Caco-2 (cell line): ENCODE measurements at regions of chr7 and their contacts with region 1.

Region 1: GRCh38 chr7:108613112-108613759 is 43.6 kb downstream of the DNAJB9 start:
- DNase-seq: peak in 1 of 2 experiments; percentile 62
- H3K4me3 ChIP-seq: no peak overlapping the region
- H3K4me3 Mint-ChIP-seq: no peak overlapping the region
- H3K27ac Mint-ChIP-seq: no peak overlapping the region
- H3K4me1 ChIP-seq: peaks cover 11% of the 10 kb centered on the region; the same call in 1 of the 2 replicates
- H3K4me1 Mint-ChIP-seq: peaks cover 12% of the 10 kb centered on the region
- H3K27me3 ChIP-seq: no peaks in the 10 kb centered on the region
- H3K27me3 Mint-ChIP-seq: no peaks in the 10 kb centered on the region
- CTCF ChIP-seq: peak; percentile 59 to 88

Region 2: GRCh38 chr7:108222236-108222892 is 390.9 kb before region 1 on chr7:
- CTCF ChIA-PET with region 1: no interaction called
- POLR2A ChIA-PET with region 1: no interaction called
- intact Hi-C with region 1: no loop called
- DNase-seq: peak; percentile 58 to 62
- H3K4me3 ChIP-seq: no peak overlapping the region
- H3K4me3 Mint-ChIP-seq: no peak overlapping the region
- H3K27ac Mint-ChIP-seq: peak overlapping the region; percentile 67
- H3K4me1 ChIP-seq: peaks cover 17% of the 10 kb centered on the region
- H3K4me1 Mint-ChIP-seq: peaks cover 20% of the 10 kb centered on the region
- H3K27me3 ChIP-seq: no peaks in the 10 kb centered on the region
- H3K27me3 Mint-ChIP-seq: no peaks in the 10 kb centered on the region
- CTCF ChIP-seq: peak in 1 of 2 experiments; percentile 55

Region 3: DNA sequence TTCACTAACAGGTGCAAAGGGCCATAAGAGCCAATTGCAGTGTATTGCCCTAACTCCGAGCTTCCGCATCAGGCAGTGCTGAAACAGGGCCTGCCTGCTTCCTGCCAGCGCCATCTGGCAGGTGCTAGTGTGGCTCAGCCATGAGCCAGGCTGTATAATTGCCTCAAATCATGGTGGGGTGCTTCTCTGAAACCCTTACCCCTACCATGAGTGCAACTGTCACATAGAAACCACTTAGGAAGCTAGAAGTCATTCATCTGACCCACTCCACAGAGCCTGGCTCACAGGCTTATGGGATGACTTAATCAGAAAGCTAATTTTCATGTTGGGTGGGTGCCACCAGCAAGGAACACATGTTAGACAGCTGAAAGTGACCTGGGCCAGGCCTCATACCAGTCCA is 349.8 kb before region 1 on chr7:
- CTCF ChIA-PET with region 1: no interaction called
- POLR2A ChIA-PET with region 1: no interaction called
- intact Hi-C with region 1: no loop called
- DNase-seq: no peak
- H3K4me3 ChIP-seq: no peak overlapping the region
- H3K4me3 Mint-ChIP-seq: no peak overlapping the region
- H3K27ac Mint-ChIP-seq: no peak overlapping the region
- H3K4me1 ChIP-seq: no peaks in the 10 kb centered on the region
- H3K4me1 Mint-ChIP-seq: peaks cover 6% of the 10 kb centered on the region
- H3K27me3 ChIP-seq: no peaks in the 10 kb centered on the region
- H3K27me3 Mint-ChIP-seq: no peaks in the 10 kb centered on the region
- CTCF ChIP-seq: no peak

Region 4: DNA sequence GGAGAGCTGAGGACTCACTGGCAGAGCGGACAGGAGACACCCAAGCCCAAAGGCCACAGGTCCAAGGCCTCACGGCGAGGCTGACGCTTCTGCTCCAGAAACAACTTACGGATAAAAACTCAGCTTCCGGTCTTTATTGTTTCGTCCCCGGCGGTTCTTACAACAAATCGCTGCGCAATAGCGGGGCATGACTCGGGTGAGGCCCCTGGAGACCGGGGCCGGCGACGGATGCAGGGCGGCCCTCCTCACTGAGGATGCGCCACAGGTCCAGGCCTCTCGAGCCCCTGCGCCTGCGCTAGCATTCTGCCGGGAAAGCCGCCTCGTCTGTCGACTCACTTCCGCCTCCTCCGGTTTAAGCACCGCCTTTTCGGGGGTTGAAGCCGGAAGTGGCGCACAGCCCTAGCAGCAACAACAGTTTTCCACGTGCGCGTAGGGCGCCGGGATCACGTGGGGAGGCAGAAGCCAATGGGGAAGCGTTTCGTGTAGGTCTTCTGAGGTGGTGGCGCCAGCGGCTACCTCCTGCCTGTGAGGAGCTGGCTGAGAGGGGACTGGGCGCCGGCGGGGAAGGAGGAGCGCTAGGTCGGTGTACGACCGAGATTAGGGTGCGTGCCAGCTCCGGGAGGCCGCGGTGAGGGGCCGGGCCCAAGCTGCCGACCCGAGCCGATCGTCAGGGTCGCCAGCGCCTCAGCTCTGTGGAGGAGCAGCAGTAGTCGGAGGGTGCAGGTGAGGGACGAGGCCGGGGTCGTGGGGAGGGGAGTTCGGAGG is 43.7 kb before region 1 on chr7 and contains the starts of genes DNAJB9 and THAP5:
- CTCF ChIA-PET with region 1: no interaction called
- POLR2A ChIA-PET with region 1: no interaction called
- intact Hi-C with region 1: loop called (anchors 2 kb)
- DNase-seq: peak; percentile 99 to 100
- H3K4me3 ChIP-seq: peak within 1 kb of the TSS; percentile 93
- H3K4me3 Mint-ChIP-seq: peak within 1 kb of the TSS; percentile 98
- H3K27ac Mint-ChIP-seq: peak within 1 kb of the TSS; percentile 98
- H3K4me1 ChIP-seq: no peaks in the 10 kb centered on the region; the same call in 1 of the 2 replicates
- H3K4me1 Mint-ChIP-seq: no peaks in the 10 kb centered on the region
- H3K27me3 ChIP-seq: no peaks in the 10 kb centered on the region
- H3K27me3 Mint-ChIP-seq: no peaks in the 10 kb centered on the region
- CTCF ChIP-seq: no peak
- total RNA-seq, gene DNAJB9: 22.0 and 22.1 TPM in 2 replicates
- total RNA-seq, gene THAP5: 18.3 and 20.4 TPM in 2 replicates

Region 5: DNA sequence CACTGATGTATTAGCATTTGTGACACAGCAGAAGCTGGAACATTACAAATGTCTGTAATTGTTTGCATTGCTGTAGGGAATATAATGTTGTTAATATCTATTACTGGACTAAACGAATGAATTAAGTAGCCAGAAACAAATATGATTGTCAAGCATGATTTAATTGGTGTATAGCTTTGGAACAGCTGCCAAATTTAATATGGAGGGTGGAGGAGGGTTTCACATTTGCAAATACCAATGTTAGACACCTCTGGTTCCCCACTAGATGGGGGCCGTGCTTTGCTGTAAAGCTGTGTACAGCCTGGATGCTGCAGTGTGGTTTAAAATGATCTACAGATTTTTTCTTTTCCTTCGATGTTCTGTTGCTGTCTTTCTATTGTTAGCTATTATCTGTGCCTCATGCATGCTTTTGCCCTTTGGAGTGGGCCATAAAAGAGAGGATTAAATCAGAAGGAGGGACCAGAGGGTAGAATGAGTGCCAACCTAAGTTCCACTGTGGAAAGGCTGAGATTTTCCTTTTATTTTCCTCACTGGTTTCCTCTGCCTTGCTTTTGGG is 20.5 kb before region 1 on chr7:
- CTCF ChIA-PET with region 1: no interaction called
- POLR2A ChIA-PET with region 1: no interaction called
- intact Hi-C with region 1: loop called (anchors 2 kb)
- DNase-seq: peak; percentile 61 to 69
- H3K4me3 ChIP-seq: no peak overlapping the region
- H3K4me3 Mint-ChIP-seq: no peak overlapping the region
- H3K27ac Mint-ChIP-seq: no peak overlapping the region
- H3K4me1 ChIP-seq: peaks cover 20% of the 10 kb centered on the region
- H3K4me1 Mint-ChIP-seq: peaks cover 19% of the 10 kb centered on the region
- H3K27me3 ChIP-seq: no peaks in the 10 kb centered on the region
- H3K27me3 Mint-ChIP-seq: no peaks in the 10 kb centered on the region
- CTCF ChIP-seq: peak; percentile 45 to 71

Region 6: DNA sequence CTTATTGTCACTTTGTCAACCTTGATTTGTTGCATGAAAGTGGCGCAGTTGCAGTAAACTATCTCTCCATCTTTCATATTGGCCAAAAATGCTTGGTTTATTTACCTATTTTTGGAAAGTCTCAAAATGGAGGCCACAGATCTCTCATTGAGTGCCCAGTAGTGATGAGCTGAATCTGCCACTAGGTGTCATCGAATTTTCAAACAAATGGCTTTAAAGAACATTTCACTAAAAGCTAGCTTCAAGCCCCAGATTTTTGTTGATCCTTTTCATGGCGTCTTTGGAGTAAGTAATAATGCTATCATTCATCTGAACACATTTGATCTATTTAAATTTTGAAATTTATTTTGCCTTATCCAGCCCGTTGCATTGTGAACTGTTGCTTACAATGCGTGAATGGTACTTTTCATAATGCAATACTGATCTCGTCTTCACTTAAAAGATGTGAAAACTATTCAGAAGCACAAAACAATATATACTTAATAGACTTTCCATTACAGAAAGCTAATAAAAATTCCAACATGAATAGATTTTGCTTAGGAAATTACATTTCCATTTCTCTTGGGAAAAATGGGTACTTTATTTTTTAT is 192.7 kb after region 1 on chr7:
- CTCF ChIA-PET with region 1: no interaction called
- POLR2A ChIA-PET with region 1: no interaction called
- intact Hi-C with region 1: loop called (anchors 5 kb)
- DNase-seq: peak in 1 of 2 experiments; percentile 20
- H3K4me3 ChIP-seq: no peak overlapping the region
- H3K4me3 Mint-ChIP-seq: no peak overlapping the region
- H3K27ac Mint-ChIP-seq: no peak overlapping the region
- H3K4me1 ChIP-seq: no peaks in the 10 kb centered on the region
- H3K4me1 Mint-ChIP-seq: no peaks in the 10 kb centered on the region
- H3K27me3 ChIP-seq: no peaks in the 10 kb centered on the region
- H3K27me3 Mint-ChIP-seq: no peaks in the 10 kb centered on the region
- CTCF ChIP-seq: peak; percentile 50 to 63

Region 7: DNA sequence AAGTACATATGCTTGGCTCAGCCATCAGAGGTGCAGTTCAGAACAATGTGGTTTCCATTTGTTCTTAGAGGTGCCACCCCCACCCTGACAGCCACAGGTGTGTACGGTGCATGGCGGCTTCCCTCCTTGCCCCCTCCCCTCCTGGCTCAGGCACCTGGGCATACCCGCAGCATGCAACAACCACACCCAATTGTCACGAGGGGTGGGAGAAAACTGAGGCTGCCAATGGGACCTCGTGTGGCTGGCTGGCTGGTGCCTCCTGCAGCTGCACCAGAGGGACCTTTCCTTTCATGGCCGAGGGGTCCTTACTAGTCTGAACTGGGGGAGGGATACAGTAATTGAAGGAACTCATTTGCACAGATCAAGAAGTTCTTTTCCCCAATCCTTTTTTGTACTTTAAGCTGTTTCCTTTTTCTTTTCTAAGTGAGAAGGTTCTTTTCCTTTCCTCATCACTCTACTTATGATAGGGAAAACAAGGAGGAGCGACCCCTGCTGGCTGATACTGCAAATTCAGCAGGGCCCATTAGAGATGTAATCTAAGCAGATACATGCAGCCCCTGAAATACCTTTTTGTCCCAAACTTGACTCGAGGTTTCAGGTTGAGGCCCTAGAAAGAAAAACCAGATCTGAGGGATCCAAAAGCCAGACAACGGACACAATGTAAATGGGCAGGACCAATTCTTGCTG is 261.8 kb after region 1 on chr7:
- CTCF ChIA-PET with region 1: no interaction called
- POLR2A ChIA-PET with region 1: no interaction called
- intact Hi-C with region 1: loop called (anchors 1 kb)
- DNase-seq: peak in 1 of 2 experiments; percentile 17
- H3K4me3 ChIP-seq: no peak overlapping the region
- H3K4me3 Mint-ChIP-seq: no peak overlapping the region
- H3K27ac Mint-ChIP-seq: no peak overlapping the region
- H3K4me1 ChIP-seq: no peaks in the 10 kb centered on the region
- H3K4me1 Mint-ChIP-seq: no peaks in the 10 kb centered on the region
- H3K27me3 ChIP-seq: no peaks in the 10 kb centered on the region
- H3K27me3 Mint-ChIP-seq: no peaks in the 10 kb centered on the region
- CTCF ChIP-seq: no peak

Region 8: GRCh38 chr7:108973075-108973474 is 359.8 kb after region 1 on chr7:
- CTCF ChIA-PET with region 1: no interaction called
- POLR2A ChIA-PET with region 1: no interaction called
- intact Hi-C with region 1: loop called (anchors 1 kb)
- DNase-seq: peak in 1 of 2 experiments; percentile 43
- H3K4me3 ChIP-seq: no peak overlapping the region
- H3K4me3 Mint-ChIP-seq: no peak overlapping the region
- H3K27ac Mint-ChIP-seq: no peak overlapping the region
- H3K4me1 ChIP-seq: 0 out of 2 replicates have a peak, but pooled peaks cover 4% of the 10 kb centered on the region
- H3K4me1 Mint-ChIP-seq: peaks cover 12% of the 10 kb centered on the region
- H3K27me3 ChIP-seq: no peaks in the 10 kb centered on the region; the same call in 1 of the 2 replicates
- H3K27me3 Mint-ChIP-seq: no peaks in the 10 kb centered on the region
- CTCF ChIP-seq: peak; percentile 29 to 48

Region 9: GRCh38 chr7:109836016-109836415 is 1222.8 kb after region 1 on chr7:
- CTCF ChIA-PET with region 1: no interaction called
- POLR2A ChIA-PET with region 1: no interaction called
- intact Hi-C with region 1: loop called (anchors 2 kb)
- DNase-seq: no peak
- H3K4me3 ChIP-seq: no peak overlapping the region
- H3K4me3 Mint-ChIP-seq: no peak overlapping the region
- H3K27ac Mint-ChIP-seq: no peak overlapping the region
- H3K4me1 ChIP-seq: no peaks in the 10 kb centered on the region
- H3K4me1 Mint-ChIP-seq: no peaks in the 10 kb centered on the region
- H3K27me3 ChIP-seq: no peaks in the 10 kb centered on the region
- H3K27me3 Mint-ChIP-seq: peaks cover 6% of the 10 kb centered on the region
- CTCF ChIP-seq: no peak